Dendritic cell treated with granulocyte-macrophage colony-stimulating factor and Interleukin-4, amounts not matched to agents 40 ng/mL and 50 ng/mL, for 4 days (primary cell): ENCODE measurements at regions of chr3 and their contacts with region 1.

Region 1: DNA sequence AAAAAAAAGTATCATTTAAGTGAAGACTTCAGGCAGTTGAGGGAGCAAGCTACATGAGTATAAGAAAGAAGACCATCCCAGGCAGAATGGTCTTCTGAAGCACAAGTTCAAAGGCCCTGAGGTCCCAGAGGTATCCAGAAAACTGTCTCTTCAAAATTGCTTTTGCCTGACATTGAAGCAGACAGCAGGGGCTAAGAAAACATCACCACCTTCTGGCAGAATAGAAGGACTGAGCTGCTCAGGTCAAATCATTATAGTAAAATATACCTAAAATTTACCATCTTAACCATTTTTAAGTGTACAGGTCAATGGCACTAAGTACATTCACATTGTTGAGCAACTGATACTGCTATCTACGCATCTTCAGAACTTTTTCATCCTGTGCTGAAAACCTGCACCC is 16.4 kb downstream of the GPR160 start:
- H3K4me3 Mint-ChIP-seq: no peak overlapping the region
- H3K27ac Mint-ChIP-seq: peak overlapping the region; percentile 12
- H3K4me1 Mint-ChIP-seq: peaks cover 24% of the 10 kb centered on the region
- H3K27me3 Mint-ChIP-seq: no peaks in the 10 kb centered on the region

Region 2: DNA sequence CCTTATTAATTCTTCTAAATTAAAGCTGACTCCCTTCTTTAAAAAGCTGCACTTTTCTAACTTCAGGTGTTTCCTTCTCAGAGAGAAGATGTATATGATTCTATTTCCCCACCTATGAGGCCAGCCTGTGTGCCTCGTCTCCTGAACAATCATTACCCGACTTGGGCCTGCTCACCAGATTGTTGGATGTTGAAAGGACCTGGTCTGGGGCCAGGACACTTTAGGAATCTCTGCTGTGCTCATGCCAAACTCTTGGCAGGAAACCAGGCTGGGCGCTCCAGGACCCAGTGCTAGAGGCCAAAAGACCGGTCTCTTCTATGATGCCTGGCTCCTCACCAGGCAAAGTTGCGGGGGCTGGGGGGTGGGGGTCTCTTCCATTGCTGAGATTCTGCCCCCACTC is 167.5 kb before region 1 on chr3:
- intact Hi-C with region 1: no loop called
- H3K4me3 Mint-ChIP-seq: no peak overlapping the region
- H3K27ac Mint-ChIP-seq: no peak overlapping the region
- H3K4me1 Mint-ChIP-seq: no peaks in the 10 kb centered on the region
- H3K27me3 Mint-ChIP-seq: peaks cover 1% of the 10 kb centered on the region

Region 3: GRCh38 chr3:170037463-170038433 is 16.5 kb before region 1 on chr3 and contains the start of gene GPR160:
- intact Hi-C with region 1: loop called (anchors 2 kb)
- H3K4me3 Mint-ChIP-seq: peak within 1 kb of the TSS; percentile 85
- H3K27ac Mint-ChIP-seq: peak within 1 kb of the TSS; percentile 78
- H3K4me1 Mint-ChIP-seq: peaks cover 47% of the 10 kb centered on the region
- H3K27me3 Mint-ChIP-seq: no peaks in the 10 kb centered on the region